ENCODE measurements at regions of chr1 and their contacts with region 1.

Region 1: DNA sequence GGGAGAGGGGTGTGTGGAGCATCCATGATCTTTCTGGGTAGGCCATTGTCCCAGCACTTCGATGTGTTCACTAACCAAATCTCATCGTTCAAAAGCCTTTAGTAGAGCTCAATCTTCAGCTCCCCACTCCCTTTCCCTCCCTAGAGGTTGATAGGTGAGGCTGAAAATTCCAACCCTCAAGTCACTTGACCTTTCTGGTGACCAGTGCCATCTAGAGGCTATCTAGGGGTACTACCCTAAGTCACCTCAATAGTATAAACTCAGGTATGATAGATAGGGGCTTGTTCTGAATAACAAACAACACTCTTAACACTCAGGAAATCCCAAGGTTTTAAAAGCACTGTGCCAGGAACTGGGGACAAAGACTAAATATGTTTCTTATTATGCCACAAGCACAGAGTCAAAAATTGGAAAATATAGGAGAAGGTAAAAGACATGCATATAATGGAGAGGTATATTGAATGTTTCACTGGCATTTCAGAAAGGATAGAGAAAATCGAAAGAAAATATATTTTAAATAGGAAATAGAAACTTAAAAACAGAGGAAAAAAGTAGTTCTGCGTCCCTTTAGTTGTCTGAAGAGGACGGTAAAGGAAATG is 42.9 kb upstream of the CD53 start:
- DNase-seq: peak; percentile 51 to 69 (median 68)
- H3K4me3 ChIP-seq: no peak overlapping the region
- H3K27ac ChIP-seq: no peak overlapping the region
- H3K4me1 ChIP-seq: no peaks in the 10 kb centered on the region
- H3K27me3 ChIP-seq: no peaks in the 10 kb centered on the region

Region 2: GRCh38 chr1:110859062-110859461 is 29.0 kb after region 1 on chr1:
- CTCF ChIA-PET with region 1: interaction called, 10 read pairs
- POLR2A ChIA-PET with region 1: no interaction called
- DNase-seq: no peak
- H3K4me3 ChIP-seq: no peak overlapping the region
- H3K27ac ChIP-seq: no peak overlapping the region
- H3K4me1 ChIP-seq: peaks cover 0 to 3% (median 0%) of the 10 kb centered on the region in 4 experiments
- H3K27me3 ChIP-seq: no peaks in the 10 kb centered on the region

Measured in common myeloid progenitor, CD34-positive (primary cell).